Dorsolateral prefrontal cortex (tissue), 120 donors: ENCODE measurements at regions of chr19 and their contacts with region 1.

Region 1: DNA sequence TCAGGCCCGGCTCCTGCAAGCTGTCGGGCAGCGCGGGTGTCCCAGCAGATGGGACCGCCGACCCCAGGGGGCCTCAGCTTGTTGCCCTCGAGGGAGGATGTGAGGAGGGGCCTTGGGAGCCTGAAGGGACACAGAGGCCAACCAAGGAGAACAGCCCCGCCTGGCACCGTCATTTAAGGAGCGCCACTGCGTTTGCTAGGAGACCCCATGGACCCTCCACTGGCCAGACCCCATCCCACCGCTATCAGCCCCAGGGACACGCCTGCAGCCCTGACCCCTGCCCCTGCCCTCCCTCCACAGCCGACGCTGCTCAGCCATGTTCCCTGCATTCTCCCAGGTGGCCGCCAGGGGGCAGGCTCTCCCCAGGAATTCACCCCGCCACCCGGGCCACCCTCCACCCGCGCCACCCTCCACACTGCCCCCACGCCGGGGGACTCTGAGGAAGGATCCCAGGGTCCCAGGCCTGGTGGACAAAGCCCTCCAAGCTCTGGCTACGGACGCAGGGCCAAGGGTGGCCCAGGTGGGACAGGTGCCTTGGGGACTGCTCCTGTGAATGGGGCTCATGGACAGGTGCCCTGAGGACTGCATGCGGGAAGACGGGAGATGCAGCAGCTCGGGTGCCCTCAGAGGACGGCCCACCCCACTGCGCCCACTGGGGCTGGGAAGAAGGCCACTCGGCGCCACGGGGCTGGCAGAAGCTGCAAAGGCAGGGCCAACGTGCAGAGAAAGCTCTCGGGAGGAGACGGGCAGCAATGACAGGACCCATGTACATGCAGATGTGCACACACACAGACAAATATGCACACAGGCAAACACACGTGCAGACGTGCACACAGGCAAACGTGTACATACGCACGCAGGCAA is 34.4 kb downstream of the PIP5K1C start:
- DNase-seq: peak in 9 of 10 donors; percentile 50 to 84 (median 69)
- H3K4me3 ChIP-seq: peak overlapping the region in 4 of 59 donors; percentile 3 to 23 (median 18)
- H3K27ac ChIP-seq: peak overlapping the region in 28 of 59 donors; percentile 2 to 68 (median 40)
- H3K27me3 ChIP-seq: no peaks in the 10 kb centered on the region
- CTCF ChIP-seq: peak; percentile 79 to 99 (median 96)

Region 2: DNA sequence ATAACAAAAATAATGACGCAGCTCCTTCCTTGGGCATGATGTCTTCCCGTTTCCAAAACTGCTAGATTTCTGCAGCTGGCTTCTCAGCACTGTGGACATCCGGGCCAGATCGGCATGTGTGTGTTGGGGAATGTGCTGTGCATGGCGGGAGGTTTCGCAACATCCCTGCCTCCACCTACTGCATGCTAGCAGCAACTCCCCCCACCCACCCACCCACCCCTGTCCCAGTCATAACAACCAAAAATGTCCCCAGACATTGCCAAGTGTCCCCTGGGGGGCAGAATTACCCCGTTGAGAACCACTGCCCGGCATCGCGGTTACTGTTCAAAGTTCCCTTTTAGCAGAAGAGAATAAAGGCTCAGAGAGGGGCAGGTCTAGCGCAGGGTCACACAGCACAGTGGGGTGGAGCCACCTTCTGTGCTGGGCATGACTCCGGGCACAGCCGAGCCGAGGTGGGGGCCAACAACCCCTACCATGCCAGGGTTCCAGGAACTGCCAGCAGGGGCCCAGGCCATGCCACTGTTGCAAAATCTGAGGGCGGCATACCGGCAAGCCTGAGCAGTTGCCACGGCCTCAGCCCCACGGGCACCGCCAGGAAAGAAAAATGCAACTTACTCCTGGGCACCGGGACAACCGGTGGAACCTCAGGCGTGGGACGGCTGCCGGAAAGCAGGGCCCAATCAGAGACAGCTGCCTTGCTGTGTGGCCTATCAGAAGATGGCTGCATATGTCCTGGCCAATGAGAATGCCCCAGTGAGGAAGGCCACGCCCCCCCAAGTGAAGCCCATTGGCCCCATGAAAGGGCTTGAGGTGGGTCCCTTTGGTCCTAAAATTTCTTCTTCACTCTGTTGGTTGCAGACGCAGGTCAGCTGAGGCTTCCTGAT is 322.1 kb before region 1 on chr19:
- intact Hi-C with region 1: no loop called
- DNase-seq: peak; percentile 57 to 91 (median 84)
- H3K4me3 ChIP-seq: peak overlapping the region in 56 of 59 donors; percentile 6 to 61 (median 42)
- H3K27ac ChIP-seq: peak overlapping the region in 58 of 59 donors; percentile 8 to 92 (median 75)
- H3K27me3 ChIP-seq: no peaks in the 10 kb centered on the region
- CTCF ChIP-seq: peak in 46 of 56 donors; percentile 16 to 61 (median 40)

Region 3: GRCh38 chr19:3700221-3701032 is 34.5 kb after region 1 on chr19 and contains the start of gene PIP5K1C:
- intact Hi-C with region 1: loop called (anchors 2 kb)
- DNase-seq: peak; percentile 88 to 96 (median 90)
- H3K4me3 ChIP-seq: peak within 1 kb of the TSS; percentile 64 to 97 (median 82)
- H3K27ac ChIP-seq: peak within 1 kb of the TSS in 56 of 59 donors; percentile 20 to 92 (median 84)
- H3K27me3 ChIP-seq: peaks cover 0 to 11% (median 0%) of the 10 kb centered on the region in 45 donors
- CTCF ChIP-seq: peak; percentile 73 to 96 (median 87)
- total RNA-seq, gene PIP5K1C: 52.4 to 207 (median 126) TPM

Region 4: GRCh38 chr19:3821857-3822364 is 156.0 kb after region 1 on chr19:
- intact Hi-C with region 1: loop called in 1 of 2 experiments (anchors 10 kb)
- DNase-seq: peak in 6 of 10 donors; percentile 40 to 70 (median 46)
- H3K4me3 ChIP-seq: peak overlapping the region in 1 of 59 donors; percentile 11
- H3K27ac ChIP-seq: no peak overlapping the region
- H3K27me3 ChIP-seq: no peaks in the 10 kb centered on the region
- CTCF ChIP-seq: peak; percentile 74 to 99 (median 96)